ENCODE measurements at regions of chr9 and their contacts with region 1.

Region 1: DNA sequence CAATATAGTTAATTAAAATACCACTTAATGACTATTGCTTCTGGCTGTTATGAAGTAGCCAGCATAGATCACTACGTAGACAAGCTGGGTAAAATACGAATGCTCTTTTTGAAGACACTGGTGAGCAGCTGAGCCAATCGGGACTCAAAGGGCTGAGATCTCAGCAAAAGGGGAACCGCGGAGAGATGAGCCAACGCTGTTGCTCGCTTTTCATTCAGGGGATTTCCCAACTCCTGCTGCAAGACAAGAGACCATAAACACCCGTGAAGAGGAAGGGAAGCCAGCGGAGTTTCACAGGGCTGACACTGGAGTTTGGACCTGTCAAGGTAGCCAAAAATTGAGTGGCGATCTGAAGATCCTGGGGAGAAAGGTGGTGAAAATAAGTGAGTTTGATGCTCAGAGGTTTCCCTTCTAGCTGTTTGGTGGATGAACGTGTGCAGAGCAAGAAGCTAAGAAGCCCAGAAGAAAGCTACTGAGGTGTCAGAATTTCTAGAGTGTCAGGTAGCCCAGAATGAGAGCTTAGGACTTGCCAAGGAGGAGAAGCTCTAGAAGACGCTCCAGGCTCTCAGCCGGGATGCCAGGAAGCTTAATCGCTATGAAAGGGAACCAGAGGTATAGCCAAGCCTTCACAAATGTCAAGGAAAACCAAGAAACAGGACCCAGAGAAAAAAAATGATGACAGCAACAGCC is 79.6 kb upstream of the RNU6ATAC start:
- DNase-seq: peak; percentile 91
- ATAC-seq: peak; percentile 96
- H3K4me3 ChIP-seq: peak overlapping the region; percentile 30 to 56 (median 49)
- H3K4me3 Mint-ChIP-seq: peak overlapping the region; percentile 79
- H3K27ac ChIP-seq: peak overlapping the region; percentile 67 to 90
- H3K27ac Mint-ChIP-seq: peak overlapping the region; percentile 92
- H3K4me1 ChIP-seq: peaks cover 29 to 50% of the 10 kb centered on the region in 2 donors
- H3K4me1 Mint-ChIP-seq: peaks cover 48% of the 10 kb centered on the region
- H3K27me3 ChIP-seq: peaks cover 0 to 4% (median 0%) of the 10 kb centered on the region in 4 experiments
- H3K27me3 Mint-ChIP-seq: no peaks in the 10 kb centered on the region
- CTCF ChIP-seq: no peak

Region 2: DNA sequence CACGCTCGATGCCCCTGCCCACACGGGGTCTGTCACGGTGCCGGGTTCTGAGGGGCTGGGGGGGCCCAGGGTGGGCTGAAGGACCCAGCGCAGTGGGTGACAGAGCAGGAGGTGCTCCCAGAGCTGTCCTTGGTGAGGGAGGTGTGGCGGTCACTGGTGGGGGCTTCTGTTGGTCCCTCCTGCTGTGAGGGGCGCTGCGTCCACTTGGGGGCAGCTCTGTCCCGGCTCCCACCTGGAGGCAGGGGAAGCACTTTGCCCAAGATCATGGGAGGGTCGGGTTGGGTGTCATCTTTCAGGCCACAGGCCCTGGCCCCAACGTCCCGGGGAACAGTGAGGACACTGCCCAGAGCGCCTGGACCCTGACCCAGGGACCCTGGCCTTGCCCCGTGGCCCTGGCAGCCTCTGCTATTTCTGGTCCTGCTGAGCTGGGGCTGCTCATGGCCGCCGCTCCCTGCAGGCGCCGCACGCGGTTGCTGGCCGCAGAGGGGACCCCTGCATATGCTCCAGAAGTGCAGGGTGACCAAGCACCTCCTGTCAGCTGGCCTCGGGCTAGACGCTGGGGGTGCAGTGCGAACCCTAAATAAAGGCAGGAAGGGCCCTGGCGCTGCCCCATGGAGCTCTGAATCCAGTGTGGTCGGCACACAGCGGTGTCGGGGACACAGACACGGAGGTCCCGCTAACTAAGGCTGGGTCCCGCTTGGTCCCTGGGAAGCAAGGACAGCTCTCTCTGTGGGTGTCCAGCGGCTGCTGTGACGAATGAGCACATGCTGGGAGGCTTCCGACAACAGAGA is 67.9 kb before region 1 on chr9:
- CTCF ChIA-PET with region 1: interaction called, 5 read pairs
- POLR2A ChIA-PET with region 1: no interaction called
- intact Hi-C with region 1: loop called (anchors 5 kb)
- DNase-seq: no peak
- ATAC-seq: no peak
- H3K4me3 ChIP-seq: no peak overlapping the region
- H3K4me3 Mint-ChIP-seq: no peak overlapping the region
- H3K27ac ChIP-seq: no peak overlapping the region
- H3K27ac Mint-ChIP-seq: no peak overlapping the region
- H3K4me1 ChIP-seq: peaks cover 21 to 23% of the 10 kb centered on the region in 2 donors
- H3K4me1 Mint-ChIP-seq: peaks cover 20% of the 10 kb centered on the region
- H3K27me3 ChIP-seq: peaks cover 0 to 28% (median 8%) of the 10 kb centered on the region in 4 experiments
- H3K27me3 Mint-ChIP-seq: peaks cover 23% of the 10 kb centered on the region
- CTCF ChIP-seq: no peak

Region 3: GRCh38 chr9:134267881-134268724 is 24.2 kb after region 1 on chr9:
- CTCF ChIA-PET with region 1: interaction called, 12 read pairs
- POLR2A ChIA-PET with region 1: no interaction called
- intact Hi-C with region 1: loop called (anchors 2 kb)
- DNase-seq: peak; percentile 70
- ATAC-seq: peak; percentile 82
- H3K4me3 ChIP-seq: peak overlapping the region in 2 of 5 experiments; percentile 1 to 10
- H3K4me3 Mint-ChIP-seq: peak overlapping the region; percentile 67
- H3K27ac ChIP-seq: peak overlapping the region in 1 of 2 donors; percentile 32
- H3K27ac Mint-ChIP-seq: peak overlapping the region; percentile 73
- H3K4me1 ChIP-seq: peaks cover 48 to 55% of the 10 kb centered on the region in 2 donors
- H3K4me1 Mint-ChIP-seq: peaks cover 46% of the 10 kb centered on the region
- H3K27me3 ChIP-seq: peaks cover 0 to 14% (median 3%) of the 10 kb centered on the region in 4 experiments
- H3K27me3 Mint-ChIP-seq: peaks cover 19% of the 10 kb centered on the region
- CTCF ChIP-seq: no peak

Region 4: GRCh38 chr9:134325817-134326723 is 82.1 kb after region 1 on chr9 and contains the start of gene RXRA:
- CTCF ChIA-PET with region 1: interaction called, 4 read pairs
- POLR2A ChIA-PET with region 1: no interaction called
- intact Hi-C with region 1: loop called (anchors 5 kb)
- DNase-seq: peak; percentile 83
- ATAC-seq: peak; percentile 77
- H3K4me3 ChIP-seq: peak within 1 kb of the TSS; percentile 17 to 85 (median 78)
- H3K4me3 Mint-ChIP-seq: peak within 1 kb of the TSS; percentile 82
- H3K27ac ChIP-seq: no peak within 1 kb of the TSS
- H3K27ac Mint-ChIP-seq: peak within 1 kb of the TSS; percentile 68
- H3K4me1 ChIP-seq: peaks cover 11 to 20% of the 10 kb centered on the region in 2 donors
- H3K4me1 Mint-ChIP-seq: peaks cover 17% of the 10 kb centered on the region
- H3K27me3 ChIP-seq: peaks cover 0 to 13% (median 3%) of the 10 kb centered on the region in 4 experiments
- H3K27me3 Mint-ChIP-seq: no peaks in the 10 kb centered on the region
- CTCF ChIP-seq: no peak
- total RNA-seq, gene RXRA: 6.7 and 6.8 TPM in 2 replicates